ENCODE measurements at regions of chr10 and their contacts with region 1.

Region 1: DNA sequence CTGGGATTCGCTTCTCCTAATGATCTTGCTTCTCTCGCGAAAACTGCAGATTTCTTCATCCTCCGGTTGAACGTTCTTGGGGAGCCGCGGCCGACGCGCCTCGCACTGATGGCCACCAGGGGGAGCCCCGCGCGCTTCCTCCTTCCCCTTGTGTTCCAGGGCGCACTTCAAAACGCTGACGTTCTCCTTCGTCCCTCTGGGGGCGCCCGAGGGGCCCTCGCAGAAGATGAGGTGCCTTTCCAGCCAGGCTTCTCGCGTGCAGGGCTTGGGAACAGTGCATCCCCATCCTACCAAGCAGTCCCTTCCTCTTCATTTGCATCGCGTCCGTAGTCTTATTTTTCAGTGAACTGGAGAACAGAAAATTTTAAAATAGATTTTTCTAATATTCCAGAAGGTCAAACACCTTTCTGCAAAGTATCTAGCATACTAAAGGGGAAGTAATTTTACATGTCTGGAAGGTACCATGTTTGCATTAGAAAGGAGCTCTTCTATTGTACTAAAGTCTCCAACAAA is 22.5 kb downstream of the GSTO2 start:
- DNase-seq: peak; percentile 90
- ATAC-seq: peak; percentile 100
- H3K4me3 Mint-ChIP-seq: no peak overlapping the region
- H3K27ac Mint-ChIP-seq: no peak overlapping the region
- H3K4me1 Mint-ChIP-seq: peaks cover 12% of the 10 kb centered on the region
- H3K27me3 Mint-ChIP-seq: peaks cover 37% of the 10 kb centered on the region

Region 2: GRCh38 chr10:104242545-104242944 is 49.0 kb before region 1 on chr10:
- CTCF ChIA-PET with region 1: no interaction called
- DNase-seq: no peak
- ATAC-seq: no peak
- H3K4me3 Mint-ChIP-seq: no peak overlapping the region
- H3K27ac Mint-ChIP-seq: no peak overlapping the region
- H3K4me1 Mint-ChIP-seq: peaks cover 12% of the 10 kb centered on the region
- H3K27me3 Mint-ChIP-seq: peaks cover 36% of the 10 kb centered on the region

Region 3: DNA sequence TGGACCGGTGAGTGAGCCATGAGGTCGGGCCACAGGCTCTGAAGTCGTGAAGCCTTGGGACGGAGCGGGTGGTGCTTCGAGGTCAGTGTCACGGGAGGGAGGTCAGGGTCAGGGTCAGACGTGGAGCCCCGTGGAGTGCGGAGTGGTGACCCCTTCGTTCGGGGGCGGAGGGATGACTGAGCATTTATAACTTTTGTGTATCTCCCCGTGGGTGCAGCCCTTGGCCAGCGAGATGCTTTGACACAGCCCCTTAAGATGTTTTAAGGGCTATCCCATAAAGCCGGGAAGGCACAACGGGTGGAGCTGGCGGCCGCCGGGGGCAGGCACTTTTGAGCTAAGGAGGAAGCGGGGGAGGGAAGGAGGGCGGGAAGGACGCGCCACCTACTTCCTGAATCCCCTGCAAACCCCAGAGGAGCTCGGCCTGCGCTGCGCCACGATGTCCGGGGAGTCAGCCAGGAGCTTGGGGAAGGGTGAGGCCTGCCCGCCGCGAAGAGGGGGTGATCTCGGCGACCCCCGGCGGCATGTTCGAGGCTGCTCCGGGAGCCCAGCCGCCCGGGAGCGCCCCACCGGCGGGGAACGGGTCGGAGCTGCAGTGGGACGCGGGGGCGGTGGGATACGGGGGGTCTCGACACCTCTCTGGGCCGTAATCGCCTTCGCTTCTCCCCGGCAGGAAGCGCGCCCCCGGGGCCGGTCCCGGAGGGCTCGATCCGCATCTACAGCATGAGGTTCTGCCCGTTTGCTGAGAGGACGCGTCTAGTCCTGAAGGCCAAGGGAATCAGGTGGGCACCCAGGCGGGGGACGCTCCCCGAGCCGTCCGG is 36.8 kb before region 1 on chr10 and contains the start of gene GSTO1:
- CTCF ChIA-PET with region 1: interaction called, 12 read pairs
- DNase-seq: peak; percentile 71
- ATAC-seq: peak; percentile 86
- H3K4me3 Mint-ChIP-seq: peak within 1 kb of the TSS; percentile 98
- H3K27ac Mint-ChIP-seq: peak within 1 kb of the TSS; percentile 89
- H3K4me1 Mint-ChIP-seq: peaks cover 45% of the 10 kb centered on the region
- H3K27me3 Mint-ChIP-seq: peaks cover 17% of the 10 kb centered on the region
- total RNA-seq, gene GSTO1: 128 to 161 TPM

Region 4: GRCh38 chr10:104274762-104275721 is 16.5 kb before region 1 on chr10:
- CTCF ChIA-PET with region 1: interaction called, 154 read pairs
- DNase-seq: peak; percentile 53
- ATAC-seq: peak; percentile 80
- H3K4me3 Mint-ChIP-seq: peak overlapping the region; percentile 52
- H3K27ac Mint-ChIP-seq: no peak overlapping the region
- H3K4me1 Mint-ChIP-seq: peaks cover 7% of the 10 kb centered on the region
- H3K27me3 Mint-ChIP-seq: peaks cover 24% of the 10 kb centered on the region

Region 5: GRCh38 chr10:104322416-104322782 is 30.9 kb after region 1 on chr10:
- CTCF ChIA-PET with region 1: interaction called, 20 read pairs
- DNase-seq: peak; percentile 74
- ATAC-seq: peak; percentile 69
- H3K4me3 Mint-ChIP-seq: peak overlapping the region; percentile 45
- H3K27ac Mint-ChIP-seq: peak overlapping the region; percentile 84
- H3K4me1 Mint-ChIP-seq: peaks cover 66% of the 10 kb centered on the region
- H3K27me3 Mint-ChIP-seq: no peaks in the 10 kb centered on the region

Region 6: GRCh38 chr10:104337974-104338735 is 46.7 kb after region 1 on chr10 and contains the start of gene ITPRIP:
- CTCF ChIA-PET with region 1: interaction called, 290 read pairs
- DNase-seq: peak; percentile 84
- ATAC-seq: peak; percentile 80
- H3K4me3 Mint-ChIP-seq: peak within 1 kb of the TSS; percentile 95
- H3K27ac Mint-ChIP-seq: peak within 1 kb of the TSS; percentile 100
- H3K4me1 Mint-ChIP-seq: peaks cover 50% of the 10 kb centered on the region
- H3K27me3 Mint-ChIP-seq: peaks cover 9% of the 10 kb centered on the region
- total RNA-seq, gene ITPRIP: 21.6 to 21.9 TPM

Region 7: DNA sequence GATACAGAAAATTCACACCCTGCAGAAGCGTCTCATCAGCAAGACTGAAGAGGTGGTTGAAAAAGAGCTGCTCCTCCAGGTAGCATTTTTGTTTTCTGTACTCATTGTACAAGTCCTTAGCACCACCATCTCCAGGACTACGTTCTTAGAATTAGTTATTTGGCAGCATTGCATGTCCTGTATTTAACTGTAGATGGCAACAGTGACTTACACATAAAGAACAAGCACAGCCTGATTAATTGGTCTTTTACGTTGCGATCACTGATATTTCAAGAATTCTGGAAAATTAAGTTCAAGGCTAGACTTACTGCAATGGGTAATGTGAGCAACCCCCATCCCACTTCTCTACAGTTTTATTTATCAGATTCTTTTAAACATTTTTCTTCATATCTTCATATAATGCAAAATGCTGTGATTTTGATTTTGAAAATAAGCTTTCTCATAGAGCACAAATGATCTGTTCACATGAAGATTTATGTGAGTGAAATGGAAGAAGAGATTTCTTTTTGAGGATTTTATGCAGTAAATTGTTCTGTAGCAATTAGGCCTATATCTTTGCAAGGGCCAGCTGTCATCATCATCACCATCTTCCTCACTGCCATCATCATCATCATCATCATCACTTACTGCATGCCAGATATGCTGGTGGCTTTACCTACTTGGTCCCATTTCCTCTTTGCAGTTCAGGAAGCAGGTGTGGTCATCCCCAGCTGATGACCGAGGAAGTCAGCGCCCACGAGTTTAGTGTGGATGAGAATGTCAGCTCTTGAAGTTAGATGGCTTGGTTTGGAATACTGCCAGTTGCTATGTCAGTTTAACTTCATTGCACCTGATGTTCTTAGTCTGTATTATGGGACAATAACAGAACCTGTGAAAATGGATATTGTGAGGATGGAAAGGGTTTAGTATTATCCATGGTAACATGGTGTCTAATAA is 115.5 kb after region 1 on chr10:
- CTCF ChIA-PET with region 1: no interaction called
- DNase-seq: no peak
- ATAC-seq: no peak
- H3K4me3 Mint-ChIP-seq: no peak overlapping the region
- H3K27ac Mint-ChIP-seq: no peak overlapping the region
- H3K4me1 Mint-ChIP-seq: peaks cover 3% of the 10 kb centered on the region
- H3K27me3 Mint-ChIP-seq: peaks cover 48% of the 10 kb centered on the region

Measured in activated CD8-positive, alpha-beta memory T cell treated with anti-CD3 and anti-CD28 coated beads, Interleukin-2, amount 10 ng/mL, durations not matched to agents 7 days and 5 days (primary cell).